SK-N-SH (cell line): ENCODE measurements at regions of chr12 and their contacts with region 1.

Region 1: DNA sequence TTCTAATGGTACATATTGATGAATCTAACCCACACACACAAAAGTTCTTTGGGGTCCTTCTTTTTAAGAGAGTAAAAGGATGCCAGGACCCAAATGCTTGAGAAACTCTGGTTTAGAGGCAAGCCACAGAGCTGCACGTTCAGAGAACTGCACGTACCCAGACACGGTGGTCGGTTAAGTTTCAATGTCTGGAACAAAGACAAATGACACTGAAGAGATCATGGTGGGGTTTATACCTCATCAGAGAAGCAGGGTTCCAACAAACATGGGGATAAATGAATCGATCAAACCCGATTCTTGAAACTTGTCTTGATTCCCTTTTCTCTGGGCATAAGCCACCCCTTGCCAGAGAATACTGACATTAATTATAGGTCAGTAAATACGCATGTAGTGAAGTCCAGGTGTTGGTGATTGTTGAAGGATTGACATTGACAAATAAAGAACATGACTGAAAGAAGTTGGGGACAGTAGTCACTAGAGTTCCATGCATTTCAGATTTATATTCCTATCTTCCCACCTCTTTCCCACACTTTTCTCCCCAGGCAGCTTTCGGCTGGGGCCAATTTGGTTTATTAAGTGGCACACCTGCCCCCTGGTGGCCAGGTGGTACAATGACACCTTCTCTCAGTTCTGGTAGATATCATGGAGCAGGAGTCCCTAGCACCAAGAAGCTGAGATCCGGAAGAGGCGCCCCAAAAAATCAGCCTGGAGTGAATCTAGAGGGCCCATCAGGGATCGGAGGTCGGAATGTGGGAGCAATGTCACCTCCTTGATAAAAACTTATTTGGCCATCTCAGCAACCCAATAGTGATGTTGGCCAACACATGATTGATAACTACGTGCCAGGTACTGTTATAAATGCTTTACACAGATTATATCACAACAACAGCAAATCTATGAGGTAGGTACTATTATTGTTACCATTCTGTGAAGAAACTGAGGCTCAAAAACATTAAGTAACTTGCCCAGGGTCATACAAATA is 17.8 kb upstream of the HDAC7 start:
- DNase-seq: peak; percentile 81
- H3K4me3 ChIP-seq: no peak overlapping the region
- H3K27ac ChIP-seq: no peak overlapping the region
- H3K4me1 ChIP-seq: no peaks in the 10 kb centered on the region; a peak in 2 of 4 replicates
- H3K27me3 ChIP-seq: no peaks in the 10 kb centered on the region
- CTCF ChIP-seq: peak; percentile 91
- EP300 ChIP-seq: no peak
- RAD21 ChIP-seq: peak; percentile 86

Region 2: GRCh38 chr12:47651368-47652254 is 185.9 kb before region 1 on chr12:
- CTCF ChIA-PET with region 1: interaction called, 13 read pairs
- POLR2A ChIA-PET with region 1: no interaction called
- DNase-seq: peak; percentile 54
- H3K4me3 ChIP-seq: peak overlapping the region in 1 of 2 experiments; percentile 47; a peak in 2 of 4 replicates
- H3K27ac ChIP-seq: no peak overlapping the region
- H3K4me1 ChIP-seq: peaks cover 3 to 4% of the 10 kb centered on the region in 2 experiments; a peak in 2 of 4 replicates
- H3K27me3 ChIP-seq: no peaks in the 10 kb centered on the region
- CTCF ChIP-seq: peak; percentile 75
- EP300 ChIP-seq: no peak
- RAD21 ChIP-seq: peak; percentile 88

Region 3: GRCh38 chr12:47736877-47737676 is 100.4 kb before region 1 on chr12:
- CTCF ChIA-PET with region 1: interaction called, 109 read pairs
- POLR2A ChIA-PET with region 1: no interaction called
- DNase-seq: peak; percentile 84
- H3K4me3 ChIP-seq: no peak overlapping the region; a peak in 1 of 4 replicates
- H3K27ac ChIP-seq: peak overlapping the region; percentile 18 to 94; a peak in 3 of 4 replicates
- H3K4me1 ChIP-seq: peaks cover 20 to 60% of the 10 kb centered on the region in 2 experiments; a peak in 3 of 4 replicates
- H3K27me3 ChIP-seq: no peaks in the 10 kb centered on the region
- CTCF ChIP-seq: no peak
- EP300 ChIP-seq: no peak; a peak in 1 of 4 replicates
- RAD21 ChIP-seq: no peak

Region 4: GRCh38 chr12:47779301-47779942 is 58.1 kb before region 1 on chr12:
- CTCF ChIA-PET with region 1: interaction called, 458 read pairs
- POLR2A ChIA-PET with region 1: no interaction called
- DNase-seq: peak; percentile 88
- H3K4me3 ChIP-seq: peak overlapping the region in 1 of 2 experiments; percentile 31; a peak in 1 of 4 replicates
- H3K27ac ChIP-seq: no peak overlapping the region
- H3K4me1 ChIP-seq: peaks cover 15 to 44% of the 10 kb centered on the region in 2 experiments; a peak in 3 of 4 replicates
- H3K27me3 ChIP-seq: no peaks in the 10 kb centered on the region
- CTCF ChIP-seq: peak; percentile 92
- EP300 ChIP-seq: no peak
- RAD21 ChIP-seq: peak; percentile 98

Region 5: GRCh38 chr12:47819896-47820630 is 17.4 kb before region 1 on chr12 and contains the start of gene HDAC7:
- CTCF ChIA-PET with region 1: interaction called, 59 read pairs
- POLR2A ChIA-PET with region 1: interaction called, 5 read pairs
- DNase-seq: peak; percentile 97
- H3K4me3 ChIP-seq: peak within 1 kb of the TSS; percentile 63 to 83
- H3K27ac ChIP-seq: peak within 1 kb of the TSS; percentile 90 to 92
- H3K4me1 ChIP-seq: peaks cover 32 to 40% of the 10 kb centered on the region in 2 experiments
- H3K27me3 ChIP-seq: no peaks in the 10 kb centered on the region
- CTCF ChIP-seq: no peak
- EP300 ChIP-seq: peak; percentile 11 to 25; a peak in 2 of 4 replicates
- RAD21 ChIP-seq: no peak
- polyA plus RNA-seq, gene HDAC7: 32.7 and 51.0 TPM in 2 replicates

Region 6: GRCh38 chr12:47949441-47950308 is 112.2 kb after region 1 on chr12:
- CTCF ChIA-PET with region 1: interaction called, 16 read pairs
- POLR2A ChIA-PET with region 1: no interaction called
- DNase-seq: peak; percentile 90
- H3K4me3 ChIP-seq: no peak overlapping the region
- H3K27ac ChIP-seq: no peak overlapping the region
- H3K4me1 ChIP-seq: peaks cover 0 to 15% of the 10 kb centered on the region in 2 experiments; a peak in 1 of 4 replicates
- H3K27me3 ChIP-seq: peaks cover 5% of the 10 kb centered on the region; the same call in 1 of the 2 replicates
- CTCF ChIP-seq: peak; percentile 88
- EP300 ChIP-seq: no peak
- RAD21 ChIP-seq: peak; percentile 83